PC-3 (cell line): ENCODE measurements at regions of chr3 and their contacts with region 1.

Region 1: DNA sequence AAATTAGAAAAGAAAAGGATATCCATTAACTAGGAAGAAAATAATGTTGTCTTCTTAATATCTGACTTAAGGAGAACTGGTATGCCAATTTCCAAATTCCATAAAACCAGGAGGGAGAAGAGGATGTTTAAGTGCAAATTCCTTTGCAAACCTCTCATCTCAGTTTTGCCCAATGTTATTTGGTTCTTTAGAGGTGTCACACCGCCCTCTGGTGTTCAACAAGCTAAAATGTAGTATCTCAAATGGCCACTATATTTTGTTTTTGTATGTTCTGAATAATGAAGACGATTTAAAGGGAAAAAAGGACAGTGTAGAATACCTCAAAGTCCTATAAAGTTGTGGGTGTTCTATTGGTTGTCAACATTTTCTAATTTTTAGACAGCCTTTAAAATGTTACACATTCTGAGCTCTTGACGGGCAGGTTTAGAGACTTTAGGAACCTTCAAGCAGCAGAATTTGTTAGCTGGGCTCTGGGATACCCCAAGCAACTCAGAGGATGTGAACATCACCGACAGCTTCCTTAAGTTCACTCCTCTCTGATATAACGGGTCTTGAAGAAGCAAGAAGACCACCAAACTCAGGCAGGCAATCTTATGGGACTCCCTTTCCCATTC is 458.3 kb downstream of the MFSD1 start:
- DNase-seq: peak; percentile 81
- ATAC-seq: peak; percentile 61
- H3K4me3 ChIP-seq: no peak overlapping the region
- H3K27ac ChIP-seq: no peak overlapping the region
- H3K4me1 ChIP-seq: no peaks in the 10 kb centered on the region
- H3K27me3 ChIP-seq: no peaks in the 10 kb centered on the region
- CTCF ChIP-seq: peak; percentile 90

Region 2: GRCh38 chr3:158845765-158846350 is 414.3 kb before region 1 on chr3:
- CTCF ChIA-PET with region 1: no interaction called
- POLR2A ChIA-PET with region 1: no interaction called
- intact Hi-C with region 1: loop called (anchors 1 kb)
- DNase-seq: peak; percentile 62
- ATAC-seq: peak; percentile 50
- H3K4me3 ChIP-seq: no peak overlapping the region
- H3K27ac ChIP-seq: no peak overlapping the region
- H3K4me1 ChIP-seq: no peaks in the 10 kb centered on the region
- H3K27me3 ChIP-seq: no peaks in the 10 kb centered on the region
- CTCF ChIP-seq: peak; percentile 78

Region 3: DNA sequence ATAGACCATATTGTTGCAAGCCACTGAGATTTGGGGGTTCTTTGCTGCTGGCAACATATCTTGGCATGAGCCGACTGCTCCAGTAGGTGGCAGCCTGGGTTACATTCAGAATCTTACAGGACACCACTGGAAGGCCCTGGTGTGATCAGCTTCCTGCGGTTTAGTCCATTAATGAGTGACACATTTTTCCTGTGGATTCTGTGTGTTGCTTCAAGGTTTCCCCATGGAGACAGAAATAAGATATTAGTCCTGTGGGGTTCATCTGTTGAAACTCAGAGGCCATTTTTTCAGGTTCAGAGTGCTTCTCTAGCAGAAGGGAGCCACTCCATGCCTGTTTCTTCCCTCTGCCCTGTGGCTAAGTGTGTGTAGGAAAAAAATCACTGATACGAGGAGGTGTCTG is 342.1 kb before region 1 on chr3:
- CTCF ChIA-PET with region 1: no interaction called
- POLR2A ChIA-PET with region 1: no interaction called
- intact Hi-C with region 1: loop called (anchors 1 kb)
- DNase-seq: peak; percentile 68
- ATAC-seq: peak; percentile 87
- H3K4me3 ChIP-seq: no peak overlapping the region
- H3K27ac ChIP-seq: no peak overlapping the region
- H3K4me1 ChIP-seq: peaks cover 3% of the 10 kb centered on the region; the same call in 1 of the 2 replicates
- H3K27me3 ChIP-seq: no peaks in the 10 kb centered on the region
- CTCF ChIP-seq: peak; percentile 81

Region 4: DNA sequence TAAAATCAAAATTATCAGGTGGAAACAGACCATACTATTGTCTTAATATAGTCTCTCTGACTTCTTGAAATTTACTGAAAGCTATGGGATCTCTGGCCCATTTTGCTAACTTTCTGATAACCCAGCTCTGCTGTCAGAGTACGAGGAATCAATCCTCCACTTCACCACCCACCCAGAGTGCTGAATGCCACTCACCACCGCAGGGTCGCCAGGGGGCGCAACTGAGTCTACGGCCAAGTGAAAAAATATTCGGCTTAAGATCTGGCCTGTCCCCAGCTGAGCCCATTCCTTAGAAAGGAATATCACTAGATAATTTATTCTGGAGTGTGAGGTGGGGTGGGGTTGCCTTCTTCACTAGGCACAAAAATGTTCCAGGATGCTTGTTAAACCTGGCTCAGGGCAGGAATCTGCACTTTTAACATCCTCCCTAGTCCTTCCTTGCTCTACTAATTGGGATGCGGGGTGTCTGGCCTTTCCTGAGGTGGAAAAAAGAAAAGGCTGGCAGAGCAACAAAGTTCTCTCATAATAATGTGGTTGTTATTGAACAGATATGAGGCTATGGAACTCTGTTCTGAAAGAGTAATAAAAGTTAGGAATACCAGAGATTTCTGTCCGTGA is 62.3 kb after region 1 on chr3:
- CTCF ChIA-PET with region 1: no interaction called
- POLR2A ChIA-PET with region 1: no interaction called
- intact Hi-C with region 1: no loop called
- DNase-seq: peak; percentile 48
- ATAC-seq: no peak
- H3K4me3 ChIP-seq: no peak overlapping the region
- H3K27ac ChIP-seq: no peak overlapping the region
- H3K4me1 ChIP-seq: peaks cover 4% of the 10 kb centered on the region; the same call in 1 of the 2 replicates
- H3K27me3 ChIP-seq: no peaks in the 10 kb centered on the region
- CTCF ChIP-seq: peak; percentile 86

Region 5: GRCh38 chr3:159586571-159587202 is 326.5 kb after region 1 on chr3:
- CTCF ChIA-PET with region 1: no interaction called
- POLR2A ChIA-PET with region 1: no interaction called
- intact Hi-C with region 1: loop called (anchors 1 kb)
- DNase-seq: peak; percentile 71
- ATAC-seq: peak; percentile 89
- H3K4me3 ChIP-seq: no peak overlapping the region
- H3K27ac ChIP-seq: no peak overlapping the region
- H3K4me1 ChIP-seq: no peaks in the 10 kb centered on the region
- H3K27me3 ChIP-seq: peaks cover 21% of the 10 kb centered on the region
- CTCF ChIP-seq: peak; percentile 87

Region 6: GRCh38 chr3:159804726-159805410 is 544.7 kb after region 1 on chr3:
- CTCF ChIA-PET with region 1: interaction called, 3 read pairs
- POLR2A ChIA-PET with region 1: no interaction called
- intact Hi-C with region 1: loop called (anchors 2 kb)
- DNase-seq: peak; percentile 93
- ATAC-seq: peak; percentile 98
- H3K4me3 ChIP-seq: no peak overlapping the region
- H3K27ac ChIP-seq: no peak overlapping the region
- H3K4me1 ChIP-seq: peaks cover 22% of the 10 kb centered on the region
- H3K27me3 ChIP-seq: no peaks in the 10 kb centered on the region
- CTCF ChIP-seq: peak; percentile 97

Region 7: DNA sequence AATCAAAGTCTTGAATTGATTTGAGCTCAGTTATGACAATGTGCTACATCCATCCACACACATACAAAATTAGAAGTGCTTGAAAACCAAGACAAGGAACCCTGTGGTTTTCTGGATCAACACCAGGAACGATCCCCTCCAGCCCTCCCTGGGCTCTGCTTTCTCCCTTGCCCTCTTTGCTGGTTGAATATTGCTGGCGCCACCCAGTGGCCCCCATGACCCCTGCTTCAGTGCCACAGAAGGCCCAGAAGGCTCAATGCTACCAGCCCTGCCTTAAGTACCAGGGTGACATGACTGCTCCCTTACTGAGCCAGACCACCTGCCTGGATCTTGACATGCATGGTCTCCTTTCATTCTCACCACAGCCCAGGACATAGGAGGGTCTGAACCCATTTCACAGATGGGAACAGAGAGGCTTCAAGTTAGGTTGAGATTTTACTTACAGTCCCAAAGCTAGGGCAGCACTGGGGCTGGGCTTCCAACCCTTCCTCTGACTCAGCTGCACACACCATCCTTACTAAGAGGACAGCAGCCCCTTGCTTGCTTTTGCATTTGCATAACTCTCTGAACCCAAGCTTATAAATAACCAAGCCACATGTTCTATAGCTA is 743.5 kb after region 1 on chr3:
- CTCF ChIA-PET with region 1: no interaction called
- POLR2A ChIA-PET with region 1: no interaction called
- intact Hi-C with region 1: loop called (anchors 1 kb)
- DNase-seq: peak; percentile 78
- ATAC-seq: peak; percentile 82
- H3K4me3 ChIP-seq: no peak overlapping the region
- H3K27ac ChIP-seq: no peak overlapping the region
- H3K4me1 ChIP-seq: no peaks in the 10 kb centered on the region
- H3K27me3 ChIP-seq: no peaks in the 10 kb centered on the region
- CTCF ChIP-seq: peak; percentile 87